Naive thymus-derived CD4-positive, alpha-beta T cell (primary cell): ENCODE measurements at regions of chr19 and their contacts with region 1.

Region 1: GRCh38 chr19:18152444-18152816 is 533 bp upstream of the PIK3R2 start:
- DNase-seq: peak; percentile 92 to 99 (median 97)
- ATAC-seq: peak; percentile 76
- H3K4me3 ChIP-seq: peak overlapping the region; percentile 82
- H3K4me3 Mint-ChIP-seq: peak overlapping the region; percentile 81 to 95 (median 88)
- H3K27ac ChIP-seq: peak overlapping the region; percentile 88
- H3K27ac Mint-ChIP-seq: peak overlapping the region; percentile 89 to 97 (median 95)
- H3K4me1 ChIP-seq: peaks cover 16 to 20% of the 10 kb centered on the region in 2 donors
- H3K4me1 Mint-ChIP-seq: peaks cover 9 to 32% (median 24%) of the 10 kb centered on the region in 7 donors
- H3K27me3 ChIP-seq: no peaks in the 10 kb centered on the region
- H3K27me3 Mint-ChIP-seq: no peaks in the 10 kb centered on the region

Region 2: DNA sequence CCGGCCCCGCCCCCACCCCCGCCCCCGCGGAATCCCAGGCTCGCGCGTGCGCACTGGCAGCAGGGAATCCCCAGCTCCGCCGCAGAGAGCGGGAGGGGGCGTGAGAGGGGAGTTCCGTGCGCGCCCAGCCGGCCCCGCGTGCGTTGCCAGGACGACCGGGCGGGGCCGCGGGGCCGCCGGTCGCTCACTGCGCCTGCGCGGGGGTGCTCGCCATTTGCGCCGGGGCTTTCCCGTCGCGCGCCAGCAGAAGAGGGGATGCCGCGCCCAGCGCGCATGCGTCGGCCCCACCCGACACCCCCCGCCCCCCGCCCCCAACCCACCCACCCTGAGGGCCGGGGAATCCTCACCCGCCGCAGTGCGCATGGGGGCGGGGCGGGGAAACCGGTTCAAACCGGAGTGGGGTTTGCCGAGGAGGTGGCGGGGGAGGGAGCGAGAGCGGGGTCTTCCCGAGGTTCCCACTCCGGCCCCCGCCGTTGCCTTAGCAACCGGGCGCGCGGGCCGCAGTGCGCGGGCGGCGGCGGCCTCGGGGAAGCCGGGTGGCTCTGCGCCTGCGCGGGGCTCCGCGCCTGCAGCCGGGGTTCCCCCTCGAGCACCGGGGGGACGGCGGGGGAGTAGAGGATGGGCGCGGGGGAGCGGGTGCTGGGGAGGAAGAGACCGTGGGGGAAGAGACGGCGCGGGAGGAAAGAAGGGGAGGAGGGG is 204.5 kb before region 1 on chr19:
- CTCF ChIA-PET with region 1: no interaction called
- POLR2A ChIA-PET with region 1: no interaction called
- intact Hi-C with region 1: loop called in 1 of 2 experiments (anchors 1 kb)
- DNase-seq: peak; percentile 91 to 99 (median 95)
- ATAC-seq: peak; percentile 87
- H3K4me3 ChIP-seq: peak overlapping the region; percentile 41
- H3K4me3 Mint-ChIP-seq: peak overlapping the region; percentile 68 to 88 (median 82)
- H3K27ac ChIP-seq: peak overlapping the region; percentile 99
- H3K27ac Mint-ChIP-seq: peak overlapping the region in 7 of 9 donors; percentile 48 to 96 (median 87)
- H3K4me1 ChIP-seq: peaks cover 37 to 50% of the 10 kb centered on the region in 2 donors
- H3K4me1 Mint-ChIP-seq: peaks cover 22 to 55% (median 43%) of the 10 kb centered on the region in 7 donors
- H3K27me3 ChIP-seq: peaks cover 18 to 28% of the 10 kb centered on the region in 2 donors
- H3K27me3 Mint-ChIP-seq: peaks cover 27 to 43% (median 30%) of the 10 kb centered on the region in 5 donors

Region 3: DNA sequence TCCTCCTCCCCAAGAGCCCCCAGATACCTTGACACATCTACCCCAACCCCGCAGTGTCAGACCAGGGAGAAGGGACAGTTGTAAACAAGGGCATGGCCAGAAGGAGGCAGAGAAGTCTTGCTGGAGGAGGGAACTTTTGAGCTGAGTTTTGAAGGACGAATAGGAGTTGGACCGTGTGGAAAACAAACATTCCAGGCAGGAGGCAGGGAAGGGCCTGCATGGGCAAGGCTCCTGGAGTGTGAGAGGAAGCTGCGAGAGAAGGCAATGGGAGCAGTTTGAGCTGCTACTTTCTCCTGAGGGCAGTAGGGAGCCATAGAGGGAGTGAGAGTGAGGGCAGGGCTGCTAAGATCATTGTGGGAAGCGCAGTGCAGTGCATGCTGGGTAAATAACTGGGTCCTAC is 89.0 kb before region 1 on chr19:
- CTCF ChIA-PET with region 1: interaction called, 5 read pairs
- POLR2A ChIA-PET with region 1: interaction called, 5 read pairs
- intact Hi-C with region 1: loop called (anchors 1 to 5 kb)
- DNase-seq: peak in 5 of 9 donors; percentile 31 to 45 (median 33)
- ATAC-seq: no peak
- H3K4me3 ChIP-seq: no peak overlapping the region
- H3K4me3 Mint-ChIP-seq: no peak overlapping the region
- H3K27ac ChIP-seq: no peak overlapping the region
- H3K27ac Mint-ChIP-seq: peak overlapping the region in 4 of 9 donors; percentile 28 to 76 (median 55)
- H3K4me1 ChIP-seq: peaks cover 4% of the 10 kb centered on the region in 2 donors
- H3K4me1 Mint-ChIP-seq: peaks cover 0 to 6% (median 4%) of the 10 kb centered on the region in 7 donors
- H3K27me3 ChIP-seq: no peaks in the 10 kb centered on the region
- H3K27me3 Mint-ChIP-seq: no peaks in the 10 kb centered on the region

Region 4: DNA sequence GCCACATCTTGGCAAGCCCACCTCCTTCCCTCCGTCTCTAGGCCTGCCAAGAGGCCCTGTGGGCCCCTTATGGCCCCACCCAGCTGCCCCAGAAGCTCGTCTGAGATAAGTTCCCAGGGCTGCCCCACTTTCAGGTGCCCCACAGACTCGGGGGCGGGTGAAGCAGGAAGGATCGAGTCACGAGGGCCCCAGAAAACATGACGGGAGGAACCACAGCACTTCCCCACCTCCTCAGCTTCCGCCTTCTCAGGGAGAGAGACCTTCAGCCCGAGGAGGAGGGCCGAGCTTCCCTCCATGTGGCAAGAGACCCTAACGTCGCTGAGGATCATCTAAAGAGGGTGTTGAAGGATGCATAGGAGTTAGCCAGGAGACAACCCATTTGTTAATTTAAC is 61.2 kb before region 1 on chr19:
- CTCF ChIA-PET with region 1: interaction called, 4 read pairs
- POLR2A ChIA-PET with region 1: interaction called, 7 read pairs
- intact Hi-C with region 1: loop called (anchors 1 kb)
- DNase-seq: peak; percentile 52 to 84 (median 79)
- ATAC-seq: peak; percentile 84
- H3K4me3 ChIP-seq: no peak overlapping the region
- H3K4me3 Mint-ChIP-seq: peak overlapping the region; percentile 59 to 95 (median 74)
- H3K27ac ChIP-seq: peak overlapping the region; percentile 82
- H3K27ac Mint-ChIP-seq: peak overlapping the region; percentile 94 to 99 (median 98)
- H3K4me1 ChIP-seq: peaks cover 54 to 69% of the 10 kb centered on the region in 2 donors
- H3K4me1 Mint-ChIP-seq: peaks cover 35 to 79% (median 64%) of the 10 kb centered on the region in 7 donors
- H3K27me3 ChIP-seq: no peaks in the 10 kb centered on the region
- H3K27me3 Mint-ChIP-seq: no peaks in the 10 kb centered on the region

Region 5: DNA sequence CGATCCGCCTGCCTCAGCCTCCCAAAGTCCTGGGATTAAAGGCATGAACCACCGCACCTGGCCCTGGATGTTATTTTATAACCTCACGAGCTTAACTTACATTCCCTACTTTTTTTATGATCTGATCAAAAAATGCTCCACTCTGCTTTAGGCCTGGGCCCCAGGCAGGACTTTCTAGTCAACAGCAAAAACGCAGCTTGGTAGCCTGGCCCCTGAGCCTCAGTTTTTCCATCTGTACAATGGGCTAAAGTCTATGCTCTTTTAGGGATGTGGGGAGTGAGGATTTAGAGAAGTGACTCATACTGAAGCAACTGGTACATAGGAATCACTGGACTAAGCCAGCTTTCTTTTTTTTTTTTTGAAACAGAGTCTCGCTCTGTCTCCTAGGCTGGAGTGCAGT is 11.4 kb before region 1 on chr19:
- CTCF ChIA-PET with region 1: interaction called, 5 read pairs
- POLR2A ChIA-PET with region 1: interaction called, 14 read pairs
- intact Hi-C with region 1: no loop called
- DNase-seq: no peak
- ATAC-seq: no peak
- H3K4me3 ChIP-seq: no peak overlapping the region
- H3K4me3 Mint-ChIP-seq: no peak overlapping the region
- H3K27ac ChIP-seq: no peak overlapping the region
- H3K27ac Mint-ChIP-seq: peak overlapping the region in 1 of 9 donors; percentile 29
- H3K4me1 ChIP-seq: no peaks in the 10 kb centered on the region
- H3K4me1 Mint-ChIP-seq: no peaks in the 10 kb centered on the region
- H3K27me3 ChIP-seq: no peaks in the 10 kb centered on the region
- H3K27me3 Mint-ChIP-seq: no peaks in the 10 kb centered on the region

Region 6: DNA sequence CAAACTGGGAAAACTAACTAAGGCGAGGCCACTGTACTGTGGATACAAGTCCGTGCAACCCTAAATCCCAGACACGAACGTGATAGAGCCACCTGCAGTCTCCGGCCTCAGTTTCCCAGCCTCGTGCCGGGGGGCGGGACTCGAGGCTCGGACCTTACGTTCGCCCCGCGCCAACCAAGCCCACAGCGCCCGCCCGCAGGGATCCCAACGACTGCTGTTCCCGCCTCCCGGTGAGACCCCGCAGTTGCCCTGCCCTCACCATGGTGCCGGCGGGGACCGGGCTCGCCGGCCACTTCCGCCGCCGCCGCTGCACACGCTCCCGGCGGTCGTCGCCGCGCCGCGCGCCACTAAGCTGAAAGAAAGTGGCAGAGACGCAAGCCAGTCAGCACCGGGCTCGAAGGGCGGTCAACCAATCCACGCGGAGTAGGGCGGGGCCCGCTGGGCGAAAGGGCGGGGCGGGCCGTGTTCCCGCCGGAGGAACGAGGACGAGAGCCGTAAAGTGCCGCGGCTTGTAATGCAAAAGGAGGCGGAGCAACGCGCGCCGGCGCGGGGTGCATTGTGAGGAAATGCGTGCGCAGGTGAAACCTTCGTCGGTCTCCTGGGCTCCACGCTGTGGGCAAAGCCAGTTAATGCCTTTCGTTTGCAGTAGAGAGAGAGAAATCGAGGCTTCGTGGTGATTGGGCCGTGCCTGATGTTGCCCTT is 170.5 kb after region 1 on chr19 and contains the start of gene LSM4:
- CTCF ChIA-PET with region 1: no interaction called
- POLR2A ChIA-PET with region 1: interaction called, 5 read pairs
- intact Hi-C with region 1: loop called in 1 of 2 experiments (anchors 1 kb)
- DNase-seq: peak; percentile 95 to 100 (median 99)
- ATAC-seq: peak; percentile 98
- H3K4me3 ChIP-seq: peak within 1 kb of the TSS; percentile 86
- H3K4me3 Mint-ChIP-seq: peak within 1 kb of the TSS; percentile 80 to 88 (median 84)
- H3K27ac ChIP-seq: peak within 1 kb of the TSS; percentile 94
- H3K27ac Mint-ChIP-seq: peak within 1 kb of the TSS; percentile 89 to 99 (median 95)
- H3K4me1 ChIP-seq: peaks cover 47 to 55% of the 10 kb centered on the region in 2 donors
- H3K4me1 Mint-ChIP-seq: peaks cover 42 to 58% (median 51%) of the 10 kb centered on the region in 7 donors
- H3K27me3 ChIP-seq: no peaks in the 10 kb centered on the region
- H3K27me3 Mint-ChIP-seq: no peaks in the 10 kb centered on the region
- total RNA-seq, gene LSM4: 45.3 to 131 (median 56.2) TPM